Activated naive CD4-positive, alpha-beta T cell treated with anti-CD3 and anti-CD28 coated beads, Interleukin-2, amount 10 ng/mL, durations not matched to agents 7 days and 5 days (primary cell): ENCODE measurements at regions of chr3 and their contacts with region 1.

Region 1: DNA sequence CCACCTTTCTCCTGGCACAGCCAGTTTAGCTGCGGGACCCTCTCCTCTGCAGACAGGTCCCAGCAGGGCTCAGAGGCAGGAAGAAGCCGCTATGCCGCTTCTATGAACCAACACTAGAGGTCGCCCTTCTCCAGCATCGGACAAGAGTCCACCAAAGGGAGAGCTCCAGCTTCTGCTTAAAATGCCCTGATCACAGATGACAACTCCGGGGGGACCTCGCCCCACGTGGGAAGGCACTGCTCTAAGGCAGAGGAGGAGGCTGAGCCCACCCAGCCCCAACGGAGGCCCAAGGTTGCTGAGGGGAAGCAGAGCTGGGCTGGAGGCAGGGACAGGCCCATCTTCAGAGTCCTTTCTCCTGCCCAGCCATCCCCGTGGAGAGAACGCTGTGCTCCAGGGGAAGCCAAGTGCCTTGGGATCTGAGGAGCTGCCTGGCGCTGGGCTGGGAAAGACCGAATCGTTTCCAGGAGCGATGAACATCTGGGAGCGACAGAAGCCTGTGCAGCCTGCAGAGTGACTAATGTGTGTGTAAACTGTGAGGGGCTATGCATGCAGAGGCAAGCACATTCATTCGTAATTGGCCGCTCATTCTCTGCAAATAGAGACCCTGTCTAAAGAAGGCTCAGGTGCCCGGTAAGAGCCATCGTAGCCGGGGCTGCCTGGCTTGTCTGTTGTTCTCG is 43.5 kb upstream of the BDH1 start:
- DNase-seq: peak; percentile 86
- H3K4me3 Mint-ChIP-seq: no peak overlapping the region
- H3K27ac Mint-ChIP-seq: peak overlapping the region; percentile 52
- H3K4me1 Mint-ChIP-seq: peaks cover 46% of the 10 kb centered on the region
- H3K27me3 Mint-ChIP-seq: peaks cover 4% of the 10 kb centered on the region

Region 2: DNA sequence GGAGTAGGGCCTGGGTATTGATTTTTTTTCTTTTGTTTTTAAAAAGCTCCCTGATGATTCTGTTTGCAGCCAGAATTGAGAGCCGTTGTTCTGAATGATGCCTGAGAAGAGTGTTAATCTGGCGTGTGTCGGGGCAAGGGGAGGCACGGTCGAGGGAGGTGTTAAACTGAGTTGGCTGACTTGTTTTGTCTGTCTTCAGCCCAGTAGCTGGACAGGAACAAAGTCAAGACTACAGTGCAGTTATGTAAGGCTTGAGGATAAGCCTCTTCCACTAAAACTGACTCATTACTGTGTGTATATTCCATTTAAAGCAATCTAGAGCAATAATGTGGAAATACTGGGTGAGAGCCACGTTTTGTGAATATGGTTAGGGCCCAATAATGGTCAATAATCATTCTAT is 181.8 kb before region 1 on chr3:
- CTCF ChIA-PET with region 1: no interaction called
- DNase-seq: no peak
- H3K4me3 Mint-ChIP-seq: no peak overlapping the region
- H3K27ac Mint-ChIP-seq: no peak overlapping the region
- H3K4me1 Mint-ChIP-seq: no peaks in the 10 kb centered on the region
- H3K27me3 Mint-ChIP-seq: peaks cover 37% of the 10 kb centered on the region

Region 3: DNA sequence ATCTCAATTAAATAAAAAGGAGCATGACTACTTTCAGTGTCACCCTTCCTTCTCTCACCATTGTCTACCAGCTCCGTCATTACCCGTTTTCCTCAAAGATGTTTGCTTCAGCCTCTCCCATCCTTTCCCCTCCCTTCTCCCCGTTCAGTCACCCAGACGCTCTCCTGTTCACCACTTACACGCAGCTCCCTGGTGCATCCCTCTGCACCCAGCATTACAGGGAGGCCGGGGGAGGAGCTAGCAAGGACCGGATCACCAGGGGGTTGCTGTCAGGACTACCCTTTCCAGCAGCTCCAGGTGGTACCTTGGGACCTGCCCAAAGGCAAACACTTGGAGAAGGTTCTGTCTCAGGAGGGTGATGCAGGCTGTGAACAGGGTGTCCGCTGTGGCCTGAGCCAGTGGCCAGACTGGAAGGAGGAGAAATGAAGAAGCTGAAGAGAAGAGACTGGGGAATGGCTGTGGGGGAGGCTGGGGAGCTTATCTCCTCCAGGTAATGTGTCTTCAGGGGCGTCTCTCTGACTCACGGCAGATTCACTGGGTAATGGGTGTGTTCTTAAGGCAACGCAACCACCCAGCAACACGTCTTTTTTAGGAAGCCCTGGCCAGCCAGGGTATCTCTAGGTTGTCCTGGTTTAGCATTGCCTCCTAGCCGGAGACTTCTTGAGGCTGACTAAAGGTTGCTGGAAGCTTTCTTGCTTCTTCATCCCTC is 21.7 kb before region 1 on chr3:
- CTCF ChIA-PET with region 1: interaction called, 11 read pairs
- DNase-seq: no peak
- H3K4me3 Mint-ChIP-seq: no peak overlapping the region
- H3K27ac Mint-ChIP-seq: no peak overlapping the region
- H3K4me1 Mint-ChIP-seq: peaks cover 2% of the 10 kb centered on the region
- H3K27me3 Mint-ChIP-seq: peaks cover 27% of the 10 kb centered on the region

Region 4: GRCh38 chr3:197613199-197613598 is 14.0 kb after region 1 on chr3:
- CTCF ChIA-PET with region 1: interaction called, 24 read pairs
- DNase-seq: peak; percentile 49
- H3K4me3 Mint-ChIP-seq: no peak overlapping the region
- H3K27ac Mint-ChIP-seq: peak overlapping the region; percentile 94
- H3K4me1 Mint-ChIP-seq: peaks cover 27% of the 10 kb centered on the region
- H3K27me3 Mint-ChIP-seq: no peaks in the 10 kb centered on the region

Region 5: GRCh38 chr3:197670361-197670760 is 71.1 kb after region 1 on chr3:
- CTCF ChIA-PET with region 1: interaction called, 11 read pairs
- DNase-seq: no peak
- H3K4me3 Mint-ChIP-seq: no peak overlapping the region
- H3K27ac Mint-ChIP-seq: no peak overlapping the region
- H3K4me1 Mint-ChIP-seq: no peaks in the 10 kb centered on the region
- H3K27me3 Mint-ChIP-seq: peaks cover 8% of the 10 kb centered on the region